HepG2 (cell line): ENCODE measurements at regions of chr9 and their contacts with region 1.

Region 1: GRCh38 chr9:37903647-37904444 is at the start of gene SLC25A51:
- DNase-seq: peak; percentile 88
- ATAC-seq: peak; percentile 76
- H3K4me3 ChIP-seq: peak within 1 kb of the TSS; percentile 77 to 94 (median 90)
- H3K27ac ChIP-seq: peak within 1 kb of the TSS; percentile 72
- H3K4me1 ChIP-seq: peaks cover 53% of the 10 kb centered on the region
- H3K27me3 ChIP-seq: no peaks in the 10 kb centered on the region; a peak in 1 of 5 replicates
- CTCF ChIP-seq: peak; percentile 99
- EP300 ChIP-seq: peak in 1 of 2 experiments; percentile 28; a peak in 1 of 4 replicates
- POLR2A ChIP-seq: peak; percentile 25 to 71; a peak in 3 of 4 replicates
- RAD21 ChIP-seq: peak; percentile 75; the same call in 1 of the 2 replicates
- total RNA-seq, gene SLC25A51: 37.7 and 40.7 TPM in 2 replicates

Region 2: GRCh38 chr9:37415011-37415719 is 488.7 kb before region 1 on chr9:
- CTCF ChIA-PET with region 1: no interaction called
- POLR2A ChIA-PET with region 1: no interaction called
- in situ Hi-C with region 1: no loop called
- intact Hi-C with region 1: no loop called
- DNase-seq: peak; percentile 76
- ATAC-seq: peak; percentile 42
- H3K4me3 ChIP-seq: peak overlapping the region; percentile 7 to 51 (median 29); a peak in 4 of 6 replicates
- H3K27ac ChIP-seq: no peak overlapping the region
- H3K4me1 ChIP-seq: peaks cover 76% of the 10 kb centered on the region
- H3K27me3 ChIP-seq: no peaks in the 10 kb centered on the region
- CTCF ChIP-seq: peak; percentile 90
- EP300 ChIP-seq: no peak
- POLR2A ChIP-seq: no peak
- RAD21 ChIP-seq: peak; percentile 50; the same call in 1 of the 2 replicates

Region 3: GRCh38 chr9:37784616-37785483 is 119.0 kb before region 1 on chr9 and contains the start of gene EXOSC3:
- CTCF ChIA-PET with region 1: no interaction called
- POLR2A ChIA-PET with region 1: no interaction called
- in situ Hi-C with region 1: no loop called
- intact Hi-C with region 1: loop called (anchors 5 kb)
- DNase-seq: peak; percentile 92
- ATAC-seq: peak; percentile 96
- H3K4me3 ChIP-seq: peak within 1 kb of the TSS; percentile 81 to 95 (median 95)
- H3K27ac ChIP-seq: peak within 1 kb of the TSS; percentile 87
- H3K4me1 ChIP-seq: peaks cover 40% of the 10 kb centered on the region
- H3K27me3 ChIP-seq: no peaks in the 10 kb centered on the region
- CTCF ChIP-seq: peak; percentile 59
- EP300 ChIP-seq: peak in 1 of 2 experiments; percentile 27; a peak in 1 of 4 replicates
- POLR2A ChIP-seq: peak; percentile 95 to 96
- RAD21 ChIP-seq: no peak; the same call in 1 of the 2 replicates
- total RNA-seq, gene EXOSC3: 68.7 and 98.1 TPM in 2 replicates

Region 4: DNA sequence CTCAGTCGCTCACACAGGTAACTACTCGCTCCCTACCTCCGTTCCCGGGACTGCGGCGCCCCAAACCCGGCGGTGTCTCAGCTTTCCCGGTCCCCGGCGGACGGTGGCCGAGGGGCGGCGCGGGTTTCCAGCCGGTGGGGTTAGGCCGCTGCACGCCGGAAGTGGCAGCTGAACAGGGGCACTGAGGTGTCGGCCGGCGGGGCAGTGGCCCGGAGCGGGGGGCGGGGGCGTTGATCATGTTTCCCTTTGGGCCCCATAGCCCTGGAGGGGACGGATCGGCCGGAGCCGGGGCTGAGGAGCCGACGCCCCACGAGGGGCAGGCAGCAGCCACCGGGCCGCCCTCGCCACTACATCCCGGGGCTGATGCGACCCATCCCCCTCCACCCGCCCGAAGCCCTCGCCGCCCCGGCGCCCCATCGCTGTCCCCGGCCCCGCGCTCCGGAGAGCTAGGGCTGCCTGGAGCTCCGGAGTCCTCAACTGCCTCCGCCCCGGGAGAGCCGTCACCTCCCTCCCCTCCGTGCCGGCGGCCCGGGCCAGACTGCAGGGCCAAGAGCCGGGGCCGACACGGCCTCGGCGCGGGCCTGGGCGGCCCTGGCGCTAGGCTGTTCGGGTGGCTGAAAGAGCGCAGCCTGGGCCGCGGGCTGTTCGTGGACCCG is 103.1 kb before region 1 on chr9 and contains the start of gene DCAF10:
- CTCF ChIA-PET with region 1: no interaction called
- POLR2A ChIA-PET with region 1: no interaction called
- in situ Hi-C with region 1: no loop called
- intact Hi-C with region 1: loop called (anchors 1 kb)
- DNase-seq: peak; percentile 72
- ATAC-seq: peak; percentile 92
- H3K4me3 ChIP-seq: peak within 1 kb of the TSS; percentile 93 to 96 (median 94)
- H3K27ac ChIP-seq: peak within 1 kb of the TSS; percentile 89
- H3K4me1 ChIP-seq: peaks cover 32% of the 10 kb centered on the region
- H3K27me3 ChIP-seq: no peaks in the 10 kb centered on the region
- CTCF ChIP-seq: peak; percentile 55
- EP300 ChIP-seq: peak in 1 of 2 experiments; percentile 67; a peak in 2 of 4 replicates
- POLR2A ChIP-seq: peak; percentile 80 to 85
- RAD21 ChIP-seq: peak; percentile 62; the same call in 1 of the 2 replicates
- total RNA-seq, gene DCAF10: 9.2 and 13.5 TPM in 2 replicates

Region 5: GRCh38 chr9:37840560-37841194 is 63.2 kb before region 1 on chr9:
- CTCF ChIA-PET with region 1: no interaction called
- POLR2A ChIA-PET with region 1: no interaction called
- in situ Hi-C with region 1: no loop called
- intact Hi-C with region 1: no loop called
- DNase-seq: no peak
- ATAC-seq: no peak
- H3K4me3 ChIP-seq: no peak overlapping the region
- H3K27ac ChIP-seq: no peak overlapping the region
- H3K4me1 ChIP-seq: no peaks in the 10 kb centered on the region
- H3K27me3 ChIP-seq: no peaks in the 10 kb centered on the region
- CTCF ChIP-seq: no peak
- EP300 ChIP-seq: no peak
- POLR2A ChIP-seq: no peak
- RAD21 ChIP-seq: no peak

Region 6: DNA sequence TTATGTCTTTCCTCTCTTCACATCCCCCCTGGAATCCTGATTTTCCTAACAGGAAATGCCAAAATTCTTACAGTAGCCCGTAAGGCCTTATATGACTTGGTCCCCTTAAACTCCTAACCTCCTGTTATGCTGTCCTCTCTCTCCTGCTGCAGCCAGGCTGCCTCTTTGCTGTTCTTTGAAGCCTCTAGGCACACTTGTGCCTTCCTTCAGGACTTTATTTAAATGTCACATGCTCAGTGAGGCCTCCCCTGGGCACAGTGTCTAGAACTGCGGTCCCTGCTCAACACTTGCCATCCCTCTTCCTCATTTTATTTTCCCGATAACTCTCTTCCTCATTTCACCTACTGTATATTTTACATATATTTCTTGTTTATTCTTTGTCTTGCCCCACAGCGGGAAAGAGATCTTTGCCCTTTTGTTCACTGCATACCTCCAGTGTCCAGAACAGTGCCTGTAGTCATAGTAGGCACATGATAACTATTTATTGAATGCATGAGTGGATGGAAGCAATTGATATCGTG is 170.7 kb after region 1 on chr9:
- CTCF ChIA-PET with region 1: no interaction called
- POLR2A ChIA-PET with region 1: no interaction called
- in situ Hi-C with region 1: loop called (anchors 5 kb)
- intact Hi-C with region 1: no loop called
- DNase-seq: peak; percentile 72
- ATAC-seq: peak; percentile 67
- H3K4me3 ChIP-seq: peak overlapping the region in 1 of 3 experiments; percentile 29; a peak in 2 of 6 replicates
- H3K27ac ChIP-seq: no peak overlapping the region
- H3K4me1 ChIP-seq: peaks cover 46% of the 10 kb centered on the region
- H3K27me3 ChIP-seq: no peaks in the 10 kb centered on the region; a peak in 1 of 5 replicates
- CTCF ChIP-seq: no peak
- EP300 ChIP-seq: no peak
- POLR2A ChIP-seq: no peak
- RAD21 ChIP-seq: no peak

Region 7: DNA sequence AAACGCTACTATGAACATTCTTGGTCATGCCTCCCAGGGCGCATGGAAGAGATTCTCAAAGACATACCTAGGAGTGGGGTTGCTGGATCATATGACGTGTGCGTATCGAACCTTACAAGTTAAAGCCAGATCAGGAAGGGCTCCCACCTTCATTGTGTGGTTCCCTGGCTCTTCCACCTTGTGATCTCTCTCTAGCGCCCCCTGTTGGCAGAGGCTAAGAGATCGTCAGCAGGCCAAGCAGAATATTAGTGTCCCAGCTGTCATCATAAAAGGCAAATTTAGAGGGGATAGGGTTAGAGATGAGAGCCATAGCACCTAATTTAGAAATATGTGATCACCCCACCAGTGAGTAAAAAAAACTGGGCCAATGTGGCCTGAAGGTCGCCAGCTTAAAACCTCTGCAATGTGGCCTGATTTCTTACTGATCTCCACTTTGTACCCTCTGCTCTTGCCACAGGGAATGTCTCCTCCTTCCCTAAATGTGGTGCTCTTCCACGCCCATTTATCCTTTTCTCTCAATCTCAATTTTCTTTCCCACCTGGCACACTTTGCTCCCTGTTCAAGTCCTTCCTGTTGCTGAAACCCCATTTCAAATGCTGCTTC is 256.9 kb after region 1 on chr9:
- CTCF ChIA-PET with region 1: no interaction called
- POLR2A ChIA-PET with region 1: no interaction called
- in situ Hi-C with region 1: no loop called
- intact Hi-C with region 1: loop called (anchors 2 kb)
- DNase-seq: peak; percentile 57
- ATAC-seq: peak; percentile 86
- H3K4me3 ChIP-seq: no peak overlapping the region
- H3K27ac ChIP-seq: no peak overlapping the region
- H3K4me1 ChIP-seq: no peaks in the 10 kb centered on the region
- H3K27me3 ChIP-seq: peaks cover 0 to 11% of the 10 kb centered on the region in 2 experiments; a peak in 2 of 5 replicates
- CTCF ChIP-seq: peak; percentile 84
- EP300 ChIP-seq: no peak
- POLR2A ChIP-seq: no peak
- RAD21 ChIP-seq: peak; percentile 22

Region 8: GRCh38 chr9:38251036-38251860 is 347.4 kb after region 1 on chr9:
- CTCF ChIA-PET with region 1: no interaction called
- POLR2A ChIA-PET with region 1: no interaction called
- in situ Hi-C with region 1: loop called (anchors 10 kb)
- intact Hi-C with region 1: no loop called
- DNase-seq: no peak
- ATAC-seq: no peak
- H3K4me3 ChIP-seq: no peak overlapping the region
- H3K27ac ChIP-seq: no peak overlapping the region
- H3K4me1 ChIP-seq: peaks cover 18% of the 10 kb centered on the region
- H3K27me3 ChIP-seq: peaks cover 0 to 5% of the 10 kb centered on the region in 2 experiments; a peak in 2 of 5 replicates
- CTCF ChIP-seq: no peak
- EP300 ChIP-seq: no peak
- POLR2A ChIP-seq: no peak
- RAD21 ChIP-seq: no peak

Region 9: DNA sequence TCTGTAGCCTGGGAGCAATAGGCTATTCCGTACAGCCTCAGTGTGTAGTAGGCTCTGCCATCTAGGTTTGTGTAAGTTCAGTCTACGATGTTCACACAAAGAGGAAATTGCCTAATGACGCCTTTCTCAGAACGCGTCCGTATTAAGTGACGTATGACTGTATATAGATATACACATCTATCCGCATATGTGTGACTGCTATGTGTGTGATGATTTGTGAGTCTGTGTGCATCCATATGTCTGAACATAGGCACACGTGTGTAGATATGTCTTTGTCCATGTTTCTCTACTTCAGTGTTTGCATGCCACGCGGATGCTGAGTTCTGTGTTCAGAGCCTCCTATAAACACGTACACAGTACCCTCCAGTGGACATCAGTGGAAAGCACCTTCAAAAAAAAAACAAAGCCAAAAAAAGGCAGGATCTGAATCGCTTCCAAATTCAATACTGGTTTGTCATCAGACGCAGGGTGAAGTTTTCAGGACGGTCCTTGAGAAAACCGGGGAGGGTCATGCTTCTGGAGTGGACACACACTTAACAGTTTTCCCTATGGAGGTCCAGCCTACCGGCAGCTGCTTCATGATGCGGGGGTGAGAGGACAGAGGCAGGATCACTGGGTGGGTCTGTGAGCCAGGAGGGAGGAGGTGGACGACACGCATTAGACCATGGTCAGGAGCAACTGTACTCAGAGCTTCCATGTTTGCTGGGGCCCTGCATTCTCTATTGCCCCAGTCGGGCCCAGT is 459.2 kb after region 1 on chr9:
- CTCF ChIA-PET with region 1: no interaction called
- POLR2A ChIA-PET with region 1: no interaction called
- in situ Hi-C with region 1: loop called (anchors 10 kb)
- intact Hi-C with region 1: no loop called
- DNase-seq: peak; percentile 49
- ATAC-seq: peak; percentile 29
- H3K4me3 ChIP-seq: no peak overlapping the region
- H3K27ac ChIP-seq: no peak overlapping the region
- H3K4me1 ChIP-seq: peaks cover 28% of the 10 kb centered on the region
- H3K27me3 ChIP-seq: no peaks in the 10 kb centered on the region
- CTCF ChIP-seq: peak; percentile 81
- EP300 ChIP-seq: no peak
- POLR2A ChIP-seq: no peak
- RAD21 ChIP-seq: 0 out of 2 replicates have a peak, but pooled peaks have one; percentile 41